Activated CD8-positive, alpha-beta T cell treated with anti-CD3 and anti-CD28 coated beads for 36 hours (primary cell): ENCODE measurements at regions of chr5 and their contacts with region 1.

Region 1: DNA sequence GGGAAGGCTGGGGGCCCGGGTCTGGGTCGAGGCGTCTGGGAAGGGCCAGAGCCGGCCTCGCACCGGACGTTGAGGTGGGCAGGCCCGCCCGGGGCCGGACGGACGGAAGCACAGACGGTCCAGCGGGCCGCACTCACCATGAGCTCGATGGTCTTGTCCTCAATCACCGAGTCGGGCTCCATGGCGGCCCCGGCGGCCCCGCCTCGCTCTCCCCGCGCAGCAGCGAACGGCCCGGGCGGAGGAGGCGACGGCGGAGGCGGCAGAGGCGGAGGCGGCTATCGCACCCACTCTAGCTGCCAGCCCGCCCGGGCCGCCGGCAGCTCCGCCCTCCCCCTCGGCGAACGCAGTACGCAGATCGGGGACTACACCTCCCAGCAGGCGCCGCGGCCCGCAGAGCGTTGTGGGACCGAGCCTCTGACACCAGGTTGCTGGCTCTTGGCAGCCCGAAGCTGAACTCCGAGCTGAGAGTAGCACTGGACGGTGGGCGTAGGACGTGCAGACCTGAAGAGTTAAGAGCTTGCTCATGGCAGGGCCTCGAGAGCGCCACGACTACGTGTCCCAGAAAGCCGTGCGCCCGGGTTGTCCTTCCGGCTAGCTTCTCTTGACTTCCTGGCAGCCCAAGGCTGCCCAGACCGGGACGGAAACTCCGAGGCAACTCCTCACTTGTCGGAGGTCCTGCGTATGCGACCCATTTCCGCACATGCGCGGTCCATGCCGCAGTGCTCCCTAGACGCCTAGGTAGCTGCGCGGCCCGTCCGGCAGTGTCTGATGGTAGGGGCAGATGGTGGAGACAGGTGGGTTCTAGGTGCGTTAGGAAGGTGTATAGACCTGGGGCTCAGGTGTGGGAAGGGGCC is at the start of gene FBXW11:
- DNase-seq: peak; percentile 97
- ATAC-seq: peak; percentile 84
- H3K4me3 Mint-ChIP-seq: peak within 1 kb of the TSS; percentile 98
- H3K27ac Mint-ChIP-seq: peak within 1 kb of the TSS; percentile 97
- H3K4me1 Mint-ChIP-seq: peaks cover 53% of the 10 kb centered on the region
- H3K27me3 Mint-ChIP-seq: no peaks in the 10 kb centered on the region
- CTCF ChIP-seq: no peak
- total RNA-seq, gene FBXW11: 49.3 to 52.6 TPM

Region 2: GRCh38 chr5:171897231-171897630 is 109.3 kb before region 1 on chr5:
- CTCF ChIA-PET with region 1: no interaction called
- POLR2A ChIA-PET with region 1: no interaction called
- intact Hi-C with region 1: no loop called
- DNase-seq: peak; percentile 56
- ATAC-seq: peak; percentile 81
- H3K4me3 Mint-ChIP-seq: no peak overlapping the region
- H3K27ac Mint-ChIP-seq: peak overlapping the region; percentile 13
- H3K4me1 Mint-ChIP-seq: peaks cover 56% of the 10 kb centered on the region
- H3K27me3 Mint-ChIP-seq: no peaks in the 10 kb centered on the region
- CTCF ChIP-seq: no peak

Region 3: DNA sequence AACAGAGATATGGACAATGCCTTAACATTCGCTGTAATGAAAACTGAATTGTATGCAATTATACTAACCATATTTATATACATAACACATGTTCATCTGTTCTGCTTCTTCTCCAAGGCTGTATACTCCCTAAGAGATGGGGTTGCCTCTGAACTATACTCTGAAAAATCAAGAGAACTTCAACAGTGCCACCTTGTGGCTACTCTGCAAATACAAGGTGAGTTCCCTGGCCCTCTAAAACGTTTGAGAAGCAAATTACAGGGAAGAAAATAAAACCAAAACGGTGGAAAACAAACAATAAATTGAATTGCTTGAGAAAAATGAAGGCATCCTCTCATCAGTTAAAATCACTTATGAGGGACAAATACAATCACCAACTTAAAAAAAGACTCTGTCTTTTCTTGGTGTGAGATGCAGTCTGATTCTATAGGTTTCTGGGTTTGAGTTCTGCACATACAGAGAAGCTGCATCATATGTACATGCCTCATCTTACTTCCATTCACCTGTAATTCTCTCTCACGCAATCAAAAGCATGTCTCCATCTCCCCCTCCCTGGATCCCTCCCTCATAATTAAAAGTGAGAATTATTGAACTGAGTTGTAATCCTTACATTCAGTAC is 98.7 kb before region 1 on chr5:
- CTCF ChIA-PET with region 1: interaction called, 77 read pairs
- POLR2A ChIA-PET with region 1: interaction called, 23 read pairs
- intact Hi-C with region 1: loop called (anchors 5 kb)
- DNase-seq: peak; percentile 67
- ATAC-seq: peak; percentile 81
- H3K4me3 Mint-ChIP-seq: no peak overlapping the region
- H3K27ac Mint-ChIP-seq: peak overlapping the region; percentile 79
- H3K4me1 Mint-ChIP-seq: peaks cover 63% of the 10 kb centered on the region
- H3K27me3 Mint-ChIP-seq: no peaks in the 10 kb centered on the region
- CTCF ChIP-seq: peak; percentile 88

Region 4: GRCh38 chr5:171984748-171985419 is 21.7 kb before region 1 on chr5:
- CTCF ChIA-PET with region 1: interaction called, 9 read pairs
- POLR2A ChIA-PET with region 1: interaction called, 43 read pairs
- intact Hi-C with region 1: no loop called
- DNase-seq: peak; percentile 67
- ATAC-seq: peak; percentile 85
- H3K4me3 Mint-ChIP-seq: no peak overlapping the region
- H3K27ac Mint-ChIP-seq: peak overlapping the region; percentile 63
- H3K4me1 Mint-ChIP-seq: peaks cover 52% of the 10 kb centered on the region
- H3K27me3 Mint-ChIP-seq: no peaks in the 10 kb centered on the region
- CTCF ChIP-seq: no peak

Region 5: GRCh38 chr5:172059661-172060100 is 53.1 kb after region 1 on chr5:
- CTCF ChIA-PET with region 1: interaction called, 12 read pairs
- POLR2A ChIA-PET with region 1: interaction called, 5 read pairs
- intact Hi-C with region 1: no loop called
- DNase-seq: no peak
- ATAC-seq: peak; percentile 53
- H3K4me3 Mint-ChIP-seq: no peak overlapping the region
- H3K27ac Mint-ChIP-seq: no peak overlapping the region
- H3K4me1 Mint-ChIP-seq: peaks cover 9% of the 10 kb centered on the region
- H3K27me3 Mint-ChIP-seq: no peaks in the 10 kb centered on the region
- CTCF ChIP-seq: peak; percentile 60